ENCODE measurements at regions of chr1 and their contacts with region 1.

Region 1: DNA sequence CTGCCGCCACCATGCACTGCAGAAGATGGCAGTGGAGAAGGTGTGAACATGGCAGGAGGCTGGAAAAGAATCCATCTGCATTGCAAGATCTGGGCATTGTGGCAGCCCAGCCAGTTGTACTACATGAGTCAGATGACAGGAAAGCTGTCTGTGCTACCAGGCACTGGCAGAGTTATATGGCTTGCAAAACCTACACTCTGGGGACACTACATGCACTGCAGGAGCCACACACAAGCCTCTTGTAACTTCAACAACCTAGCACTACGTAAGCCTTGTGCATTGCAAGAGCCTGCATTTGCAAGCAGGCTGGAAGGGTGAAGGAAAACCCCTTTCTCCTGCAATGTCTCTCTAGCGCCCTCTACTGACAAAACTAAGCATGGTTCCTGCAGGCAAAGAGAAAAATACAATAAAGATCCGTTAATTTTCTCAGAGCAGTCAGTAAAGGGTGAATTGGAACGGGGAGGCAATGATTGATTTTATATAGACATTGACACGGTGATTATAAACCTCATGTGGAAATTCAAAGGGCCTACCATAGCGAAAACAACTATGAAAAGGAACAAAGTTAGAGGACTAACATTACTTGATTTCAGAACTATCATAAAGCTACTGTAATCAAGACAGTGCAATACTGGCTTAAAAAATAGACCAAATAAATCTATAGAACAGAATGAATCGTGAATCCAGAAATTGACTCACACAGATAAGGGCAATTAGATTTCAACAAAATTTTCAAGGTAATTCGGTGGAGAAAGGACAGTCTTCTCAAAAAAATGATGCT is 26.2 kb upstream of the DYNLT5 start:
- DNase-seq: peak; percentile 91
- H3K4me3 Mint-ChIP-seq: no peak overlapping the region
- H3K27ac Mint-ChIP-seq: no peak overlapping the region
- H3K4me1 Mint-ChIP-seq: peaks cover 12% of the 10 kb centered on the region
- H3K27me3 Mint-ChIP-seq: peaks cover 13% of the 10 kb centered on the region

Region 2: GRCh38 chr1:65958561-65959350 is 767.3 kb before region 1 on chr1:
- intact Hi-C with region 1: loop called (anchors 2 kb)
- DNase-seq: peak; percentile 82
- H3K4me3 Mint-ChIP-seq: no peak overlapping the region
- H3K27ac Mint-ChIP-seq: no peak overlapping the region
- H3K4me1 Mint-ChIP-seq: peaks cover 4% of the 10 kb centered on the region
- H3K27me3 Mint-ChIP-seq: peaks cover 3% of the 10 kb centered on the region

Region 3: GRCh38 chr1:66253330-66253921 is 472.6 kb before region 1 on chr1:
- intact Hi-C with region 1: loop called (anchors 5 kb)
- DNase-seq: peak; percentile 82
- H3K4me3 Mint-ChIP-seq: no peak overlapping the region
- H3K27ac Mint-ChIP-seq: no peak overlapping the region
- H3K4me1 Mint-ChIP-seq: peaks cover 45% of the 10 kb centered on the region
- H3K27me3 Mint-ChIP-seq: no peaks in the 10 kb centered on the region

Region 4: DNA sequence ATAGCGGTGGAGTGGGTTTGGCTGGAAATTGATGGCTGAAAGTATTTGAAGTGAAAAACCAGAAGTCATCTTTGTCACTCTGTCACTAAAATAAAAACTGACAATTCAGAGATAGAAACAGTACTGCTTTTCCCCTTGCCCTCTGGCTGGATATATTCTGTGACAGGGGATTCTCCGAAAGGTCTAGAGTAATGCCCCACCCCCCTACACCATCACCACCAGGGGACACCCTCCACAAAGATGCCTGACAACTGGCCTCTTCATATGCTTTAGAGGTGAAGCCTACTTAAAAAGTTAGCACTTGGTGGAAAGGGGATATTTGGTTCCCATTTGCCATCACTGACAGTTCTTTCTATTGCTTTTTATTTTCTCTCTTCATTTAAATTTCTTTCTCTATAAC is 118.6 kb before region 1 on chr1:
- intact Hi-C with region 1: loop called (anchors 5 kb)
- DNase-seq: no peak
- H3K4me3 Mint-ChIP-seq: no peak overlapping the region
- H3K27ac Mint-ChIP-seq: no peak overlapping the region
- H3K4me1 Mint-ChIP-seq: no peaks in the 10 kb centered on the region
- H3K27me3 Mint-ChIP-seq: peaks cover 10% of the 10 kb centered on the region

Region 5: GRCh38 chr1:66676613-66677298 is 49.3 kb before region 1 on chr1:
- intact Hi-C with region 1: no loop called
- DNase-seq: no peak
- H3K4me3 Mint-ChIP-seq: no peak overlapping the region
- H3K27ac Mint-ChIP-seq: no peak overlapping the region
- H3K4me1 Mint-ChIP-seq: no peaks in the 10 kb centered on the region
- H3K27me3 Mint-ChIP-seq: peaks cover 14% of the 10 kb centered on the region

Measured in activated CD4-positive, alpha-beta T cell treated with anti-CD3 and anti-CD28 coated beads, Interleukin-2, amount 10 ng/mL, durations not matched to agents 24 days and 14 days (primary cell).